OCI-LY7 (cell line): ENCODE measurements at regions of chr3 and their contacts with region 1.

Region 1: DNA sequence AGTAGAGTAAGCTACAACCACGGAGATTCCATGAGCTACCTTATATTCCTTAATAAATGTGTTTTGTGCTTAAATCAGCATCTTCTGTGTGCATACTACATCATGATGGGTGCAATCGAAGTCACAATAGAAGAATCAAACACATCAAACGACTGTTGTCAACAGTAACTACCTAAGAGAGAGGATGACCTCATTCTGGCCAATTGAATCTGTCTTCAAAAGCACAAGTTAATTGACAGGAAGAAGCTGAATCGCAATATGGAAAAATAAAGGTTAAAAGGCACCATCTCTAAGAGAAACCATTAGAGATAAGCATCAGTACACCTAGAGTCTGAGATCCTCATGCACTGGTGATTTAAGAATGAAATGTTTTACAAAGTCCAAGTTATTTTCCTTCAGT is 39.0 kb downstream of the CD200R1L start:
- DNase-seq: no peak
- H3K4me3 ChIP-seq: no peak overlapping the region
- H3K27ac ChIP-seq: no peak overlapping the region
- H3K4me1 ChIP-seq: peaks cover 3% of the 10 kb centered on the region
- CTCF ChIP-seq: no peak

Region 2: GRCh38 chr3:112791736-112792135 is 15.9 kb before region 1 on chr3:
- CTCF ChIA-PET with region 1: no interaction called
- POLR2A ChIA-PET with region 1: interaction called, 11 read pairs
- intact Hi-C with region 1: no loop called
- DNase-seq: no peak
- H3K4me3 ChIP-seq: no peak overlapping the region
- H3K27ac ChIP-seq: no peak overlapping the region
- H3K4me1 ChIP-seq: peaks cover 8% of the 10 kb centered on the region
- CTCF ChIP-seq: no peak